H1 (cell line): ENCODE measurements at regions of chr1 and their contacts with region 1.

Region 1: DNA sequence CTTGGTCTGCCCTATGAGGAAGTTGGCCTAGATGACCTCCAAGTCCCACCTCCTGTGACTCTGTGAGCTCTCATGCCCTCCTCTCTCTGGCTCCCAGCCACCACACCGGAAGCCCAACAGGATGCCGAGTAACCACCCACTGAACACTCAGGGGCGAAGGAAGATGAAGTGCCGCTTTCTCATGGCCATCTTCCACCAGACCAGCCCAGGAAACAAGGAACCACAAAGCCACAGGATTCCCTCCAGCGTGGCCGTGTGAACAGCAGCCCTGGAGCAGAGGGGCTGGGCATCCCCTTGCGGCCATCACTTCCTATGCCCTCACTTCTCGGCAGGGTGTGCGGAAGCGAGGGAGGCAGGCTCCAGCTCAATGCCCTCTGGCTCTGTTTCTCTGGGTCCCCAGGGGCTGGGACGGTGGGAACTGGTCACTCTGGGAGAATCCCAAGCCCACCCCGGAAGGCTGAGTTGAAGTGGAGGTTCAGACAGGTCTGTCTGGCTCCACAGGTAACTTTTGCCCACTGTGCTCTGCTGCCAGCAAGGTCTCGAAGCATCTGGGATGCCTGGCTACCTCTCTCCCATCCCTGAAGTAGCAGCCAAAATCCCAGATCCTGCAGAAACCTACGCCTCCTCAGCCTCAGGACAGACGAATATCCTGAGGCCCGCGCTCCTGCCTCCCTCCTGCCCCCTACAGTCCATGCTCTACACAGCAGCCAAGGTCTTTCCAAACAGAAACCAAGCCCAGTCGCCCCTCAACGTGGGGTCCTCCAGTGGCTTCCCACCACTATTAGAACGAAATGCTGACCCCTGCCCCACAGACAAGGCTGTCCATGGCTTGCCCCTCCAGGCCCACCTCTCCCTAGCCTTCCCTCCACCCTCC is 44.2 kb upstream of the ECE1 start:
- DNase-seq: peak in 1 of 2 experiments; percentile 89
- H3K4me3 ChIP-seq: peak overlapping the region in 3 of 4 experiments; percentile 19 to 45 (median 29); a peak in 6 of 8 replicates
- H3K27ac ChIP-seq: no peak overlapping the region
- H3K4me1 ChIP-seq: peaks cover 10 to 31% (median 20%) of the 10 kb centered on the region in 4 experiments
- H3K27me3 ChIP-seq: no peaks in the 10 kb centered on the region; a peak in 1 of 7 replicates
- CTCF ChIP-seq: peak; percentile 90 to 96 (median 93)
- EP300 ChIP-seq: no peak
- POLR2A ChIP-seq: no peak
- RAD21 ChIP-seq: peak; percentile 75 to 86

Region 2: GRCh38 chr1:21232044-21232443 is 102.4 kb before region 1 on chr1:
- CTCF ChIA-PET with region 1: interaction called, 16 read pairs
- POLR2A ChIA-PET with region 1: no interaction called
- DNase-seq: peak in 1 of 2 experiments; percentile 59
- H3K4me3 ChIP-seq: no peak overlapping the region
- H3K27ac ChIP-seq: no peak overlapping the region
- H3K4me1 ChIP-seq: no peaks in the 10 kb centered on the region
- H3K27me3 ChIP-seq: no peaks in the 10 kb centered on the region
- CTCF ChIP-seq: peak; percentile 25 to 75 (median 75)
- EP300 ChIP-seq: no peak
- POLR2A ChIP-seq: no peak
- RAD21 ChIP-seq: peak; percentile 89 to 90

Region 3: DNA sequence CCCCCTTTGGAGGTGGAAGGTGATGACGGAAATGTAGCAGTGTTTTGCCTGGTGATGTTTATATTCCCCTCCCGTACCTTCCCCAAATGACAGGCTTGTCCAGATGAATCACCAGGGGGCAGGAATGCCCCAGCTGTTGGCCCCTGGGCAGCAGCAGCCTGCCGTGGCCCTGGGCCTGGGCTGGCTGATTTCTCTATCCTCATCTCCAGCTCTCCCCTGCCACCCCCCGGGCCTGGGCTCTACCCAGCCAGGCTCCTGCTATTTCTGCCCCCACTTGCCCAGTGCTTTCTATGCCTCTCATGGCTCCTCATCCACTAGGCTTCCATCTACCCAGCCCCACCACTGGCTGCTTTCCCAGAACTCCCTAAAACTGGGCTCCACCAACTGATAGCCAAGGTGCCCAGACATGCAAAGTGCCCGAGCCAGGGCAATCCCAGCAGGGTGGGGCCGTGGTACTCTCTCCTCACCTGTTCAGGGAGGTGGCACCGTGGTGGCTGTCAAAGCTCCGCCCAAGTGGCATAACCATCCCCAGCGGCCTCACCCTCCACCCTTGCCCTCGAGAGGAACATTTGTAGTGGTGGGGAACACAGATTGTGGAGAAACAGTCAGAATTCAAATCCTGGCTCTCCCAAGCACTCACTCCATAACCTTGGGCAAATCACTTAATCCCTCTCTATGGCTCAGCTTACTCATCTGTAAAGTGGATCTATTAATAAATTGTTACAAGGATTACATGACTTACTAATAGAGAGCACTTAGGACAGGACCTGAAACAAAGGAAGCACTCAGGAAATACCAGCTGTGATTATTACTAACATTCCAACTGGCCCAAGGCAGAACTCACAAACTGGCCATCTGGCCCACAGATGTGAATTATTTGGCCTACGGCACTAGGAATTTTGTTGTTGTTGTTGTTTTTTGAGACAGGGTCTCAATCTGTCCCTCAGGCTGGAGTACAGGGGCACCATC is 31.4 kb before region 1 on chr1:
- CTCF ChIA-PET with region 1: interaction called, 15 read pairs
- POLR2A ChIA-PET with region 1: no interaction called
- DNase-seq: no peak
- H3K4me3 ChIP-seq: no peak overlapping the region
- H3K27ac ChIP-seq: no peak overlapping the region
- H3K4me1 ChIP-seq: peaks cover 4 to 19% (median 10%) of the 10 kb centered on the region in 4 experiments
- H3K27me3 ChIP-seq: no peaks in the 10 kb centered on the region
- CTCF ChIP-seq: no peak
- EP300 ChIP-seq: no peak
- POLR2A ChIP-seq: no peak
- RAD21 ChIP-seq: peak; percentile 16 to 29; a peak in 2 of 4 replicates

Region 4: GRCh38 chr1:21344750-21345443 is 10.4 kb after region 1 on chr1:
- CTCF ChIA-PET with region 1: interaction called, 10 read pairs
- POLR2A ChIA-PET with region 1: interaction called, 3 read pairs
- DNase-seq: peak in 1 of 2 experiments; percentile 65
- H3K4me3 ChIP-seq: peak overlapping the region; percentile 52 to 78 (median 70)
- H3K27ac ChIP-seq: no peak overlapping the region
- H3K4me1 ChIP-seq: peaks cover 3 to 12% (median 5%) of the 10 kb centered on the region in 4 experiments
- H3K27me3 ChIP-seq: peaks cover 0 to 20% (median 15%) of the 10 kb centered on the region in 4 experiments; a peak in 6 of 7 replicates
- CTCF ChIP-seq: no peak
- EP300 ChIP-seq: no peak
- POLR2A ChIP-seq: no peak
- RAD21 ChIP-seq: no peak